Posterior vena cava (tissue), 2 donors: ENCODE measurements at regions of chr14 and their contacts with region 1.

Region 1: DNA sequence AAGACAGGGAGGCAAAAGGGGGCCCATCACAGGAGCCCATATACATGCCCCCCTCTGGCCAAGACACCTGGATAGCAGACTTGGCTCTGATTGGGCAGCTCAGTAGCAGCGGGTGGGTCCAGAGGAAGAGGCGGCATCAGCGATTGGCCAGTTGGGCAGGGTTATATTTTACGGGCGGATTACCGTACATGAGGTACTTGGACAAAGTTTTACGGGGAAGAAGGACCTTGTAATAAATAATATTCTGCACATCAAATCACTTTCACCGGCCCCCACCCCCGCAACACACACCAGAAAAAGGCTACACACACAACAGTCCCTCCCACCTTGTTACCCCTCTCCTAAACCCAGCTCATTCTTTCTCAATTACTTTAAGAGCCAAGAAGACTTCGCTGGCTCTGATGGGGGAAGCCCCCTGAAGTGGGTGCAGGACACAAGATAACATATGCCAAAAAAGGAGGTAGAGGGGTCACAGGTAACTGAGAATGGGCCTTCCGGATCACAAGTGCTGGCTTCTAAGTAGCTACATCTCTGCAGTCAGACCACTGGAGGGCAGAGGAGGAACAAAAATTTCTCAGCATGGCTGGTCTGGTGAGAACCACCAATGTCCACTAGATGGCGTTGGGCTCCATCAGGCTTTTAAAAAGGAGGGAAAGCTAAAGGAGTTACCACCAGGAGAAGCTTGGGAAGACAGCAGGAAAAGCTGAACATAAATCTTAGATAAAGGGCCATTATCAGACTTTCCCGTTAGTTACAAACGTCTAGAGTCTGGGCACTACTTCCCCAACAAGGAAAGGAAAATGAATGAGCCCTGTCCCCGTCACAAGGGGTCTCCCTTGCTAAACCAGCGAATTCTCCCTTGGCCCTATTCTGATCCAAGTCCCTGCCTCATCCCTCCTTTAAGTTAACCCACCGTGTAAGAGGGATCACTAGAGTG is 11.4 kb upstream of the CDH24 start:
- DNase-seq: peak; percentile 86

Region 2: DNA sequence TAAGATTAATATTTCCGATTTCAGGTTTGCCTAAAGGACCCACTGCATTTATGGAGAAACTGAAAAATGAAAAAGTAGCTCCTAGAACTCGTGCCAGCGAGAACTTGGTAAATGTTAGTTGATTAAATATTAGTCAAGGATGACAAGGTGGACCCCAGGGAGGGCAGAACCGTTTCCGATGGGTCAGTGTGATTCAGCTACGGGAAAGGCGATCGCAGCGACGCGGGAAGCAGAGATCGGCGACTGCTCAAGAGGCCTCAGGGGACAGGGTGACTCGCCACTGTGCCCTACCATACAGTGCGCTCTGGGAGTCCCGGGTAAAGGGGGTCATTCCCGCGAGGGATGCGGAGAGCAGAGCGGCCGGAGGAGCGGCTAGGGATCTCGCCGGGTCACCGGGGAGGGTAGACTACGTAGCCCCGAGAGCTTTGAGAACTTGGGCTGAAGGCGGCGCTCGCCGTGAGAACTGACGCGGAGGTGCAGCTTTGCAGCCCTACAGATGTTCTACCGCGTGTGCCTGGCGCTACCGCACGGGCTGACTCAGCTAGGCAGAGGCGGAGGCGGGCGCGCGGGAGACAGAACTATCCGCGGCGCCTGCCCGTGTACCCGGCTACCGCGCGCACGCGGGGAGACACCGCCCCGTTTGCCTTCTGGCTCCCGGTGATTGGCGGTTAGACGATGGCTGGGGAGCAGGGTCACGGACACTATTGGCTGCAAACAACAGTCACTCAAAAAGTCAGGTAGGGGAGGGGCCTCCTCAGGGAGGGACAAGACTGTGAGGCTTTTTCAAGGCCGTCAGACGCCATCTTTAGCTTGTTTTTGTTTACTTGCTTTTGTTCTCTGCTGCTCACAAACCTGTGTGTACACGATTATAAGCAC is 62.0 kb before region 1 on chr14:
- intact Hi-C with region 1: no loop called
- DNase-seq: peak; percentile 98

Region 3: DNA sequence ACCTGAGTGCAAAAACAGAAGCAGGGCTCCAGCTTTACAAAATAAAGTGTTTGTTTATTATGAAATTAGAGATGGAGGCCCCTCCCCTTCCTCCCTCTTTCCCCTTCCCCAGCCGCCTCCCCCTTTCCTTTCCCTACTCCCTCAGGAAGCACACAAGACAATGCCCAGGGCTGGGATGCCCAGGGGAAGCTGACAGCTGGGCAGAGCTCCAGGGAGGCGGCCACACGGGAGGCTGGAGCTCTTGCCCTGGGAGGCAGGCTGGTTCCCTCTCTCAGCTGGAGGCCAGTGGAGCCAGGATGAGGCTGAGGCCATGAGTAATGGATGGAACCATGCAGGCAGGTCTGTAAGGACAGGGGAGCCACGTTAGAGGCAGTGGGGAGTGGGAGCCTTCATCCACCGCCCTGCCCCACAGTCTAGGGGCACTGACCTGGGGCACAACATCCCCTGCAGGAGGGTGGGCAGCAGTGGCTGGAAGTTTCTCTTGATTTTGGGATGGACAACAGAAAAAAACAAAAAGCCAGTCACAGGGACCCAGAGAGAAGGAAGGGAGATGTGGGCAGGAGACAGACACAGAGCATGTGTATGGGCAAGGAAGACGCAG is 21.6 kb before region 1 on chr14:
- intact Hi-C with region 1: no loop called
- DNase-seq: no peak

Region 4: GRCh38 chr14:23114669-23115491 is 46.1 kb after region 1 on chr14:
- intact Hi-C with region 1: loop called in 1 of 2 experiments (anchors 5 kb)
- DNase-seq: peak; percentile 90